Posterior cingulate gyrus (tissue), 11 donors: ENCODE measurements at regions of chr14 and their contacts with region 1.

Region 1: DNA sequence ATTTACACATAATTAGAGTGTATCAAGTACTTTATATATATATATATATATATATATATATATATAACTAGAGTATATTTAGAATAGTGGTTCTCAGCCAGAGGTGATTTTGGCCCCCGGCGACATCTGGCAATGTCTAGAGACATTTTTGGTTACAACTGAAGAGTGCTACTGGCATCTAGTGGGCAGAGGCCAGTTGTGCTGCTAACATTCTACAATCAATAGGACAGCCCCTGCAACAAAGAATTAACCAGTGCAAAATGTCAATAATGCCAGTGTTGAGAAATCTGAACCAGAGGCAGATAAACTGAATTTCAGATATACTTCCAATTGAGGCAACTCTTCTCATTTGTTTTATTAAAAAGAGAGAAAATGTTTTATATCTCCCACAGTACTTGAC is 8.9 kb downstream of the GTF2A1 start:
- DNase-seq: peak in 6 of 10 donors; percentile 28 to 51 (median 36)

Region 2: GRCh38 chr14:80770114-80770908 is 441.5 kb before region 1 on chr14:
- intact Hi-C with region 1: no loop called
- DNase-seq: no peak

Region 3: DNA sequence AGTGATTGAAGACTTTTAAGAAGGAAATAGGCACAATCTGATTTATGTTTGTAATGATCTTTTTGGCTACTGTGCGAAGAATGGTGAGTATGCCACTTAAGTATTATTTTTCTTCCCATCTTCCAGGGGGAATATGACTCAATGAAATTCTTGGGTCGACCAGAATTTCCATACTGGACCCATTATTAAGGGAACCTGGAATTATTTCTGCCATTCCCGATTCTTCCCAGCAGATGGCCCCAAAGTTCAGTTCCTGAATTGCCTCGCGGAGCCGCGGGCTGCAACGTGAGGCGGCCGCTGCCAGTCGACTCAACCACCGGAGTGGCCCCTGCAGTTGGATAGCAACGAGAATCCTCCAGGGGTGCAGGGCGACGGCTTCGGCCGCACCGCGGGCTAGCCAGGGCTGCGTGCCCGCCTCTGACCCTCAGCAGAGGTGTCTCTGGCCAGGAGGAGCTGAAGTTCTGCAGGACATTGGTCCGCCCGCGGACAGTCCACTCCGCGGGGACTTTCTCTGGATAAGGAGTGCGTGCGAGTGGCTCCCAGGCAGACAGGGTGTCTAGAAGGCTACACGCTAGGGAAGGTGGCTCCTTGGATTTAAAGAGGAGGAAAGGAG is 257.1 kb before region 1 on chr14:
- intact Hi-C with region 1: loop called (anchors 1 kb)
- DNase-seq: peak; percentile 57 to 95 (median 82)

Region 4: GRCh38 chr14:80996049-80996901 is 215.6 kb before region 1 on chr14:
- intact Hi-C with region 1: loop called (anchors 2 kb)
- DNase-seq: peak in 3 of 10 donors; percentile 17 to 37 (median 19)